ENCODE measurements at regions of chr12 and their contacts with region 1.

Region 1: DNA sequence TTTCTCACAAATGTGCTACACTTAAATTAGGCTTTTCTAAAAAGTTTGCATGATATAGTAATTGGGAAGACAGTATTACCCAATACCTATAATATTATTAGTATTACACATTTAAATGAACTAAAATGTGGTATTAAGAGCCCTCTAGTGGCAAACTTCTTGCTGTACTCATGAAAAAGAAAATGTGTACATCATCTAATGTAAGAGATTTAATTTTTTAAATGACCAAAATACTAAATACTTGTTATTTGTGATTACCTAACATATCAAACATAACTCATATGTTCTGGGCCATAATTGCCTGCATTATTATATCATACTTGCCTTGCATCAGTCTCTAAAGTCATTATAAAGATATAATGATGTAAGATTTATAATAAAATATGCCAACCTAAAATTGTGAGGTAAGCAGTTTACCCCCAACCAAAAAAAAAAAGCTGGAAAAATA is 64.2 kb downstream of the DNAI7 start:
- DNase-seq: no peak
- ATAC-seq: no peak
- H3K4me3 ChIP-seq: no peak overlapping the region
- H3K27ac ChIP-seq: no peak overlapping the region
- H3K4me1 ChIP-seq: no peaks in the 10 kb centered on the region
- H3K27me3 ChIP-seq: no peaks in the 10 kb centered on the region

Region 2: DNA sequence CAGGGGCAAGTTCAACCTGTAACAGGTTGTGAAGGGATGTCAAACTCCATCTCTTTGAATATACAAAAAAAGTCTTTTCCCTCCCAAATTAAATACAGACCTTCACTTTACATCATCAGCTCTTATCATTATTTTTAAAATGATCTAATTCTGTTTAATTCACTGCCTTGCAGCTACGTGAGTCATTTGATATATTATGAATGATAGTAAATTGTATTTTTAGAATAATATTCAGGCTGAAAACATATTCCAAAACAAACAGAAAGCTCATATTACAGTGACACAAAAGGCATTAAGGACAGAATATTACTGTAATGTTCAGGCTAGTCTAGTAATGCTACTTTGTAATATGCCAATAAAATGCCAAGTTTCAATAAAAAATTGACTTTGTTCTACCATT is 235.2 kb before region 1 on chr12:
- intact Hi-C with region 1: no loop called
- DNase-seq: no peak
- ATAC-seq: no peak
- H3K4me3 ChIP-seq: no peak overlapping the region
- H3K27ac ChIP-seq: no peak overlapping the region
- H3K4me1 ChIP-seq: no peaks in the 10 kb centered on the region
- H3K27me3 ChIP-seq: no peaks in the 10 kb centered on the region

Region 3: DNA sequence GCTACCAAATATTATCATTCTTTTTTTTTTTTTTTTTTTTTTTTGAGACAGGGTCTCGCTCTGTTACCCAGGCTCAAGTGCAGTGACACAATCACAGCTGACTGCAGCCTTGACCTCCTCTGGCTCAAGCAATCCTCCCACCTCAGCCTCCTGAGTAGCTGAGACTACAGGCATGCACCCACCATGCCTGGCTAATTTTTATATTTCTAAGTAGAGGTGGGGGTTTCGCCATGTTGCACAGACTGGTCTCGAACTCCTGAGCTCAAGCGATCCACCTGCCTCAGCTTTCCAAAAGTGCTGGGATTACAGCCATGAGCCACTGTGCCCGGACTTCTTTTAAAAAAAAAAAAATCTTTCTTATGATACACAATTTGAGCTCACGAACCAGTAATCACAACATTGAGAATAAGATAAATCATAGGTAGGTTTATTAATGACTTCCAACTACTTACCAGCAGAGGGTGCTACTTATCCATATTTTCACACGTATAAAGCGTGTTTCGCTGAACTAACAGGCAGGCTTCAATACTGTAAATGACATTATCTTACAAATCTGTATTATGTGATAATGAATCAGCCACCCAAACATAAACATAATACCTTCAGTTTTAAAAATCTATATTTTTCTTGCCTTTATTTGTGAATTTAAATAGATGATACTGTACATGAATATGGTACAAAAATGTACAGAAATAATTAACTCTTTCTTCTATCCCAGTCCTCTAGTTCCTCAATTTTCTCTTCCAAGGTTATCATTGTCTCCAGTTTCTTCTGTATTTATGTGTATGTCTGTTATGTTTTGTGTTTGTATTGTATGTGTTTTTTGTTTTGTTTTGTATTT is 139.3 kb before region 1 on chr12:
- intact Hi-C with region 1: loop called (anchors 2 to 10 kb)
- DNase-seq: no peak
- ATAC-seq: peak; percentile 60 to 74
- H3K4me3 ChIP-seq: no peak overlapping the region
- H3K27ac ChIP-seq: no peak overlapping the region
- H3K4me1 ChIP-seq: no peaks in the 10 kb centered on the region
- H3K27me3 ChIP-seq: no peaks in the 10 kb centered on the region

Region 4: GRCh38 chr12:25639406-25639805 is 508.6 kb after region 1 on chr12:
- intact Hi-C with region 1: no loop called
- DNase-seq: no peak
- ATAC-seq: no peak
- H3K4me3 ChIP-seq: no peak overlapping the region
- H3K27ac ChIP-seq: no peak overlapping the region
- H3K4me1 ChIP-seq: no peaks in the 10 kb centered on the region
- H3K27me3 ChIP-seq: no peaks in the 10 kb centered on the region

Measured in right cardiac atrium (tissue), 5 donors.